Ascending aorta (tissue), 2 donors: ENCODE measurements at regions of chr5 and their contacts with region 1.

Region 1: DNA sequence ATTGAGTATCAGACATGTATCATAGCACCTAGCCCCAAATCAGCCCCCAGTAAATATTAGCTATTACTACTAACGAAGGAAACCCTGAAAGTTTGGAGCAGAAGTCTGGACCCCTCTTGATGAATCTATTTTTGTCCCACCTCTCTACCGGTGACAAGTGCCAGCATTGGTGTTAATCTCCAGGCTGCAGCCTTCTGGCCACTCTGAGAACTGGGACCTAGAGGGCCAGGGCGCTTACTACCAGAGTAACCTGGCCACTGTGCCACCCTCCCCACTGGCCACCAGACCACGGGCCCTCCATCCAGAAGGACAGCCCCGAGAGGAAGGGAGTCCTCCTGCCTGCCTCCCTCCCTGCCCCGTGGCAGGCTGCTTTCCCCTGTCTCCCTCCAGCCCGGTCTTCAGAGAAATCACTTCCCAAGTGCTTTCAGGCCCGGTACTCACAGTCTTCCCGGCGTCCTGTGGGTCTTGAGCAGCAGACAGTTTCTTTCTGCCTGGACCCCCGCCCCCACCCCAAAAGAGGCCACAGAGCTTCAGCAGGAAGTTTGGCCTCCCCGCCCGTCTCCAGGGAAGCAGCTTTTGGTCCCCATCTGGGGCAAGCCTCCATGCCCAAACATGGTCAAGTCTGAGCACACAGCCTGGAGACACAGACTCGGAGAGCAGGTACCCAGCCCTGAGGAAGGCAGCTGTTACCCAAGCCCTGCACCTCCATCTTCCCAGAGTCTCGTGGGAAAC is at the start of gene KCNMB1:
- DNase-seq: peak in 1 of 2 donors; percentile 80
- H3K4me3 ChIP-seq: peak within 1 kb of the TSS; percentile 59 to 73
- H3K27ac ChIP-seq: peak within 1 kb of the TSS; percentile 94 to 97
- H3K4me1 ChIP-seq: peaks cover 6 to 19% of the 10 kb centered on the region in 2 donors
- H3K27me3 ChIP-seq: no peaks in the 10 kb centered on the region
- CTCF ChIP-seq: no peak
- total RNA-seq, gene KCNMB1: 30.8 TPM

Region 2: GRCh38 chr5:170267431-170268152 is 121.4 kb before region 1 on chr5:
- intact Hi-C with region 1: loop called (anchors 1 kb)
- DNase-seq: peak in 1 of 2 donors; percentile 87
- H3K4me3 ChIP-seq: peak overlapping the region; percentile 39 to 55
- H3K27ac ChIP-seq: peak overlapping the region; percentile 7 to 34
- H3K4me1 ChIP-seq: peaks cover 0 to 6% of the 10 kb centered on the region in 2 donors
- H3K27me3 ChIP-seq: no peaks in the 10 kb centered on the region
- CTCF ChIP-seq: peak; percentile 74 to 87 (median 76)

Region 3: DNA sequence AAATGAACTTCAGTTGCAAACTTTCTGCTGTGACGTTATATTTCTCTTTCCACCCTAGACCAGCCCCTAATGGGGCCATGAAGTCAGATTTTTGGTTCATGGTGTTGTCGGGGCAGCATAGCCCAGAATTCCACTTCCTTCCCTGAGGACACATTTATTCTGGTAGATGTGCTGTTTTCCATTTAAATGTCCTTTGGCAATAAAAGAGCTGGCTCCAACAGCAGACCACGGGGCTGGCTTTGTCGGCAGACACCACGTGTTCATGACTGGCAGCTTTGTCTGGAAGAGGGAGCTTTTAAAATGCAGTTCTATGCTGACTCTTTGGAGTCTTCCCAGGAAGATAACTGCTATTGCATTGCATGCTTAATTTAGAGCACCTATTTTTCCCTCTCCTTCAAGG is 73.8 kb before region 1 on chr5:
- intact Hi-C with region 1: loop called (anchors 2 kb)
- DNase-seq: peak; percentile 71 to 88
- H3K4me3 ChIP-seq: no peak overlapping the region
- H3K27ac ChIP-seq: peak overlapping the region; percentile 72 to 87
- H3K4me1 ChIP-seq: peaks cover 4 to 9% of the 10 kb centered on the region in 2 donors
- H3K27me3 ChIP-seq: no peaks in the 10 kb centered on the region
- CTCF ChIP-seq: no peak

Region 4: GRCh38 chr5:170372971-170373370 is 16.0 kb before region 1 on chr5:
- intact Hi-C with region 1: no loop called
- DNase-seq: no peak
- H3K4me3 ChIP-seq: no peak overlapping the region
- H3K27ac ChIP-seq: no peak overlapping the region
- H3K4me1 ChIP-seq: no peaks in the 10 kb centered on the region
- H3K27me3 ChIP-seq: no peaks in the 10 kb centered on the region
- CTCF ChIP-seq: no peak

Region 5: GRCh38 chr5:170420780-170421412 is 31.9 kb after region 1 on chr5:
- intact Hi-C with region 1: loop called (anchors 2 kb)
- DNase-seq: peak in 1 of 2 donors; percentile 82
- H3K4me3 ChIP-seq: no peak overlapping the region
- H3K27ac ChIP-seq: no peak overlapping the region
- H3K4me1 ChIP-seq: no peaks in the 10 kb centered on the region
- H3K27me3 ChIP-seq: no peaks in the 10 kb centered on the region
- CTCF ChIP-seq: peak; percentile 54 to 84 (median 76)